IMR-90 (cell line): ENCODE measurements at regions of chr18 and their contacts with region 1.

Region 1: DNA sequence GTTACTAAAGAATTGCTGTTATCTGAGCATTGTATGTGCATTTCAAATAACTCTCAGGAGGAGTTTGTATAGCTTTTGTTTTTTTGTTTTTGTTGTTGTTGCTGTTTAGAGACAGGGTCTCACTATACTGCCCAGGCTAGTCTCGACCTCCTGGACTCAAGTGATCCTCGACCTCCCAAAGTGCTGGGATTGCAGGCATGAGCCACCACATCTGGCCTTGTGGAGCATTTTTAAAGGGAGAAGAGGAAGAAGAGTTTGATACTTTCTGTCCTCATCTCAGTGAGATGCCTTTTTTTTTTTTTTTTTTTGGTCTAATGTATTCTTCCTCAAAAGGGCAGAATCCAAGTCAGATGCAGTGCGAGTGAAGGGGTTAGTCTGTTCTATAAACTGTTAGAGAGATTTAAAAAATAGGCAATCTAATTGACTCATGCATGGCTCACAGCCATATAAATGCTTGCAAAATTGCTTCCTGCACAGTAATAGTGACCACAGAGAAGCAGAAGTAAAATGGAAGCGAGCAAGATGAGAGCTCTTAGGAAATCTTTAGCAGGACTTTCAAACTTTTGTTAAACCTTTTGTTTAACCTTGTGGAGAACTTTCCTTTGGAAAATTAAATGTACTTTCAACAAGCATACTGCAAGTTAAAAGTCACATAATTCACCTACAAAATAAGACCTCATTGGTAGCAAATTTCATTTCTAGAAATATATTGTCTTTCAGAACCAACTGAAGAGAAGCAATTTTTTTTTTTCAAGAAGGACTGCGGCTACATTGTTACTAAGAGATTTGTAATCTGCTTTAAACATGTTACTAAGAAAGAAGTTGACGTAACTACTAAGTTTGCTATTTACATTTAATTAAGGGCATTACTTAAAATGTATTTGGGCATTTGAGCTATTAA is 52.3 kb upstream of the ROCK1 start:
- DNase-seq: peak; percentile 93
- ATAC-seq: peak; percentile 98
- H3K4me3 ChIP-seq: peak overlapping the region; percentile 15; the same call in 1 of the 2 replicates
- H3K27ac ChIP-seq: peak overlapping the region; percentile 99
- H3K4me1 ChIP-seq: peaks cover 3% of the 10 kb centered on the region
- H3K27me3 ChIP-seq: no peaks in the 10 kb centered on the region
- CTCF ChIP-seq: no peak
- POLR2A ChIP-seq: no peak
- RAD21 ChIP-seq: no peak

Region 2: DNA sequence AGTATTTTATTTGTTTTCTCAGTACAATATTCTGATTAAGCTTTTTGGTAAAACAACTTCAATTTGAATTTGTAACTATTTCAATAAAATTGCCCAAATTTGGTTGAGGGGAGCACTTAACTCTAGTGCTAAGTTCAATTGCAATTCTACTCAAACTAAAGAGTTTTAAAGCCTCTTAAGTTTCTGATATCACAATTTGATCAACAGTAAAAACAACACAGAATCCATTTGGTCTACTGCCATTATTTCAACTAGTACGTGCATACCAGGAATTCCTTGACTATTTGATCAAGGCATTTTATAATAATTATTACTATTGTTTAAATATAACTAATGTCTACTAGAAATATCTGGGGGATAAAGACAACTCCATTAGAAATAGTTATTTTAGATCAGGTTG is 203.2 kb before region 1 on chr18:
- CTCF ChIA-PET with region 1: no interaction called
- POLR2A ChIA-PET with region 1: no interaction called
- dilution Hi-C with region 1: no loop called
- in situ Hi-C with region 1: no loop called
- intact Hi-C with region 1: loop called (anchors 5 kb)
- DNase-seq: no peak
- ATAC-seq: no peak
- H3K4me3 ChIP-seq: no peak overlapping the region
- H3K27ac ChIP-seq: no peak overlapping the region
- H3K4me1 ChIP-seq: no peaks in the 10 kb centered on the region
- H3K27me3 ChIP-seq: no peaks in the 10 kb centered on the region
- CTCF ChIP-seq: no peak
- POLR2A ChIP-seq: no peak
- RAD21 ChIP-seq: no peak

Region 3: DNA sequence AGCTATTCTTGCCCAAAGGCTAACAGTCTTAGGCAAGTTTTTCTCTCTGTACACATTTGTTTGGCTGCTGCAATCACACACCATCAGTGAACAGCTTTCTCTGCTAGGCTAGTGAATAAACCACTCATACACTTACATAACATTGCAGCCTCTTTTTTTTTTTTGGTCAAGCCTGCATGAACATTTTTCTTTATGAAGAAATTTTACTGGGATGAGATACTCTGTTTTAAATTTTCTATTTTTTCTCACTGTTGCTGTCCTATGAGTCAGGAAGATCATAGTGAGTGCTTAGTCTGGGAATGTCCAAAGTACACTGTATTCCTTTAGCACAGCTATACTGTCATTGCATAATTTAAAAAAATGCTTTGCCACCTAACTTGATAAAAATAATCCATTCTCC is 110.8 kb before region 1 on chr18:
- CTCF ChIA-PET with region 1: no interaction called
- POLR2A ChIA-PET with region 1: no interaction called
- dilution Hi-C with region 1: no loop called
- in situ Hi-C with region 1: loop called (anchors 10 kb)
- intact Hi-C with region 1: no loop called
- DNase-seq: peak; percentile 90
- ATAC-seq: peak; percentile 94
- H3K4me3 ChIP-seq: no peak overlapping the region
- H3K27ac ChIP-seq: no peak overlapping the region
- H3K4me1 ChIP-seq: peaks cover 10% of the 10 kb centered on the region
- H3K27me3 ChIP-seq: no peaks in the 10 kb centered on the region
- CTCF ChIP-seq: no peak
- POLR2A ChIP-seq: no peak
- RAD21 ChIP-seq: no peak

Region 4: DNA sequence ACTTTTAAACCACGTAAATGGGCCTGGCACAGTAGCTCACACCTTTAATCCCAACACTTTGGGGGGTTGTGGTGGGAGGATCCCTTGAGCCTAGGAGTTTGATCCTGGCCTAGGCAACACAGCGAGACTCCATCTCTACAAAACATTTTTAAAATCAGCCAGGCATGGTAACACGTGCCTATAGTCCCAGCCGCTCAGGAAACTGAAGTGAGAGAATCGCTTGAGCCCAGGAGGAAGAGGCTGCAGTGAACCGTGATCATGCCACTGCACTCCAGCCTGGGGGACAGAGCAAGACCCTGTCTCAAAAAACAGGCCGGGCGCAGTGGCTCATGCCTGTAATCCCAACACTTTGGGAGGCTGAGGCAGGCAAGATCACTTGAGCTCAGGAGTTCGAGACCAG is 64.5 kb before region 1 on chr18:
- CTCF ChIA-PET with region 1: no interaction called
- POLR2A ChIA-PET with region 1: no interaction called
- dilution Hi-C with region 1: no loop called
- in situ Hi-C with region 1: loop called (anchors 10 kb)
- intact Hi-C with region 1: no loop called
- DNase-seq: no peak
- ATAC-seq: no peak
- H3K4me3 ChIP-seq: no peak overlapping the region
- H3K27ac ChIP-seq: no peak overlapping the region
- H3K4me1 ChIP-seq: 0 out of 2 replicates have a peak, but pooled peaks cover 2% of the 10 kb centered on the region
- H3K27me3 ChIP-seq: no peaks in the 10 kb centered on the region
- CTCF ChIP-seq: no peak
- POLR2A ChIP-seq: no peak
- RAD21 ChIP-seq: no peak

Region 5: GRCh38 chr18:21141668-21142422 is 22.1 kb before region 1 on chr18:
- CTCF ChIA-PET with region 1: no interaction called
- POLR2A ChIA-PET with region 1: no interaction called
- dilution Hi-C with region 1: no loop called
- in situ Hi-C with region 1: no loop called
- intact Hi-C with region 1: loop called (anchors 1 kb)
- DNase-seq: peak; percentile 42
- ATAC-seq: peak; percentile 89
- H3K4me3 ChIP-seq: no peak overlapping the region
- H3K27ac ChIP-seq: peak overlapping the region; percentile 10; the same call in 1 of the 2 replicates
- H3K4me1 ChIP-seq: peaks cover 5% of the 10 kb centered on the region; the same call in 1 of the 2 replicates
- H3K27me3 ChIP-seq: no peaks in the 10 kb centered on the region
- CTCF ChIP-seq: no peak
- POLR2A ChIP-seq: no peak
- RAD21 ChIP-seq: no peak

Region 6: DNA sequence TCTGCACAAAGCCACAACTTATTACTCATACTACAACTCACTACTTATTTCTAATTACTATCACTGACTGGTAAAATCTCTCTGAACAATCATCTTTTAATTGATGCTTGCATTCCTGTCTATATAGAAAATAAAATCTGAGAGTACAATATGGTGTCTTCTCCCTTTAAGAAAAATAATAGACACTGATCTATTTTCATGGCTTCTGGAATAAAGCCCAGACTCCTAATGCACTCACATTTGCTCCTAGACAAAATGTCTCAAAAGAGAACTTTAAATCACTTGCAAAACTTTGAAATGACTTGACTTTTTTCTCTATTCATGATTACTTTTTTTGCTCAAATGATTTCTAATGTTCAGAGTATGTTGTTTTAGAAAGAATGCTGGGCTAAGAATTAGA is 407.9 kb after region 1 on chr18:
- CTCF ChIA-PET with region 1: no interaction called
- POLR2A ChIA-PET with region 1: no interaction called
- dilution Hi-C with region 1: no loop called
- in situ Hi-C with region 1: no loop called
- intact Hi-C with region 1: no loop called
- DNase-seq: no peak
- ATAC-seq: no peak
- H3K4me3 ChIP-seq: no peak overlapping the region
- H3K27ac ChIP-seq: no peak overlapping the region
- H3K4me1 ChIP-seq: 0 out of 2 replicates have a peak, but pooled peaks cover 2% of the 10 kb centered on the region
- H3K27me3 ChIP-seq: no peaks in the 10 kb centered on the region
- CTCF ChIP-seq: no peak
- POLR2A ChIP-seq: no peak
- RAD21 ChIP-seq: no peak

Region 7: GRCh38 chr18:21632393-21632792 is 468.5 kb after region 1 on chr18:
- CTCF ChIA-PET with region 1: no interaction called
- POLR2A ChIA-PET with region 1: no interaction called
- dilution Hi-C with region 1: no loop called
- in situ Hi-C with region 1: no loop called
- intact Hi-C with region 1: no loop called
- DNase-seq: no peak
- ATAC-seq: no peak; the same call in 1 of the 2 replicates
- H3K4me3 ChIP-seq: no peak overlapping the region
- H3K27ac ChIP-seq: no peak overlapping the region
- H3K4me1 ChIP-seq: no peaks in the 10 kb centered on the region
- H3K27me3 ChIP-seq: no peaks in the 10 kb centered on the region
- CTCF ChIP-seq: no peak
- POLR2A ChIP-seq: no peak
- RAD21 ChIP-seq: no peak